PC-3 (cell line): ENCODE measurements at regions of chr6 and their contacts with region 1.

Region 1: GRCh38 chr6:33840048-33840926 is 36.5 kb upstream of the MLN start:
- DNase-seq: peak; percentile 98
- ATAC-seq: peak; percentile 98
- H3K4me3 ChIP-seq: no peak overlapping the region
- H3K27ac ChIP-seq: peak overlapping the region; percentile 73
- H3K4me1 ChIP-seq: peaks cover 23% of the 10 kb centered on the region
- H3K27me3 ChIP-seq: no peaks in the 10 kb centered on the region
- CTCF ChIP-seq: no peak

Region 2: GRCh38 chr6:34027445-34027936 is 187.2 kb after region 1 on chr6:
- CTCF ChIA-PET with region 1: no interaction called
- POLR2A ChIA-PET with region 1: no interaction called
- intact Hi-C with region 1: loop called (anchors 10 kb)
- DNase-seq: peak; percentile 54
- ATAC-seq: peak; percentile 74
- H3K4me3 ChIP-seq: no peak overlapping the region
- H3K27ac ChIP-seq: no peak overlapping the region
- H3K4me1 ChIP-seq: no peaks in the 10 kb centered on the region
- H3K27me3 ChIP-seq: 0 out of 2 replicates have a peak, but pooled peaks cover 12% of the 10 kb centered on the region
- CTCF ChIP-seq: peak; percentile 87